ENCODE measurements at regions of chr19 and their contacts with region 1.

Region 1: GRCh38 chr19:13195678-13196077 is 45.5 kb downstream of the IER2 start:
- DNase-seq: peak; percentile 57
- ATAC-seq: peak; percentile 79
- H3K4me3 Mint-ChIP-seq: no peak overlapping the region
- H3K27ac Mint-ChIP-seq: peak overlapping the region; percentile 63
- H3K4me1 Mint-ChIP-seq: peaks cover 29% of the 10 kb centered on the region
- H3K27me3 Mint-ChIP-seq: no peaks in the 10 kb centered on the region
- CTCF ChIP-seq: no peak

Region 2: DNA sequence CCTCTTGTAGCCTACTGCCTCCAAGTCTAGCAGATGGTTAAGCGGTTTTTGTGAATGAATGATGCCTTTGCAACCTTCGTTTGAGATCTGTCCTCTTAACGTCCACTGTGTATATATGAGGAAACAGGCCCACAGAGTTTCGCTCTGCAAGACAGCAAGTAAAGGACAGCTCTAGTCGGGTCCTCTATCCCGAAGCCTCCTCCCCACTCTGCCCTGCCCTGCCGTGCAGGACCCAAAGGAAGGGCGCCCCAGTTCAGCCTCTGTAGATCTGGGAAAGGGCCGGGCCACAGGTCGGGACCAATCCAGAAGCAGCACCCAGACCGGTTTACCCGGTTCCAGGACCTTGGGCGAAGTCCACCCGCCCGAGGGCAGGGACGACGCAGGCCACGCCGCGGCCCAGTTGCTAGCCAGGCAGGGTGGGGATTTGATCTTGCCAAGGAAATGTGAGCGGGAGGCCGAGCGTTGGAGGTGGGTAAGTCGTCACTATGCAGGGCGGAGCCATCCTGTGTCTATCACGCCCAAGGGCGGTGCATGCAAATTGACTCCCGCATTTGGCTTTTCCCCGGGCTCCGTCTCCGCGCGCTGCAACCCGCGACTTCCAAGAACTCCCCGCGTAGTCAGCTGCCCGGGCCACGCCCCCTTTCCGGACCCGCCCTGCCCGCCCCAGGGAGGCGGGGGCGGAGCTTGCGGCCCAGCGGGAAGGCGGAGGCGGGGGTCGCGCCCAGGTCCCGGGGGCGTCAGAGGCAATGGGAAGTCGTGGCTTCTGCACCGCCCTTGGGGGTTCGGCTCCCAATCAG is 33.0 kb before region 1 on chr19:
- CTCF ChIA-PET with region 1: interaction called, 33 read pairs
- POLR2A ChIA-PET with region 1: interaction called, 104 read pairs
- intact Hi-C with region 1: loop called (anchors 1 kb)
- DNase-seq: peak; percentile 70
- ATAC-seq: peak; percentile 36
- H3K4me3 Mint-ChIP-seq: peak overlapping the region; percentile 84
- H3K27ac Mint-ChIP-seq: peak overlapping the region; percentile 89
- H3K4me1 Mint-ChIP-seq: peaks cover 87% of the 10 kb centered on the region
- H3K27me3 Mint-ChIP-seq: no peaks in the 10 kb centered on the region
- CTCF ChIP-seq: no peak

Region 3: GRCh38 chr19:13181747-13182388 is 13.8 kb before region 1 on chr19:
- CTCF ChIA-PET with region 1: interaction called, 12 read pairs
- POLR2A ChIA-PET with region 1: interaction called, 11 read pairs
- intact Hi-C with region 1: no loop called
- DNase-seq: no peak
- ATAC-seq: peak; percentile 66
- H3K4me3 Mint-ChIP-seq: peak overlapping the region; percentile 49
- H3K27ac Mint-ChIP-seq: peak overlapping the region; percentile 46
- H3K4me1 Mint-ChIP-seq: peaks cover 33% of the 10 kb centered on the region
- H3K27me3 Mint-ChIP-seq: no peaks in the 10 kb centered on the region
- CTCF ChIP-seq: no peak

Region 4: DNA sequence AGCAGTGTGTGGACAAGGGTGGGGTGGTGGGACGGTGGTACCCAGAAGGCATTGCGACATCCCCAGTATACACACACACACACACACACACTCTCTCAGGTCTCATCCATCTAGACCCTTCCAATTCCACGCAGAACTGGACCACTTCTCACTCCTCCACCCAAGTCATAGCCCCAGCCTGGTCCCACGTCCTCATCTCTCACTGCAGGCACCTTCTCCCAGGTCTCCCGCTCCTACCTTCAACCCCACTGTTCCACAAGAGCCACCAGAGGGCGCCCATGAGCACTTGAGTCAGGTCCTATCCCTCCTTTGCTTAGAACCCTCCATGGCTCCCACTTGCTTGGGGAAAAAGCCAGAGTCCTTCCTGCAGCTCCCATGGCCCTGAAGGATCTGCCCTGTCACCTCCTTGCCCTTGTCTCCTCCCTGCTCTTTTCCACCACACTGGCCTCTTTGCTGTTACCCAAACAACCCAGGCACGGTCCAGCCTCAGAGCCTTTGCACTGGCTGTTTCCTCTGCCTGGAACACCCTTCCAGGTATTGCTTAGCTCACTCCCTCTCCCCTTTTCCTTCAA is 17.2 kb after region 1 on chr19:
- CTCF ChIA-PET with region 1: interaction called, 9 read pairs
- POLR2A ChIA-PET with region 1: interaction called, 5 read pairs
- intact Hi-C with region 1: loop called (anchors 1 kb)
- DNase-seq: peak; percentile 60
- ATAC-seq: no peak
- H3K4me3 Mint-ChIP-seq: no peak overlapping the region
- H3K27ac Mint-ChIP-seq: no peak overlapping the region
- H3K4me1 Mint-ChIP-seq: peaks cover 66% of the 10 kb centered on the region
- H3K27me3 Mint-ChIP-seq: no peaks in the 10 kb centered on the region
- CTCF ChIP-seq: no peak

Region 5: DNA sequence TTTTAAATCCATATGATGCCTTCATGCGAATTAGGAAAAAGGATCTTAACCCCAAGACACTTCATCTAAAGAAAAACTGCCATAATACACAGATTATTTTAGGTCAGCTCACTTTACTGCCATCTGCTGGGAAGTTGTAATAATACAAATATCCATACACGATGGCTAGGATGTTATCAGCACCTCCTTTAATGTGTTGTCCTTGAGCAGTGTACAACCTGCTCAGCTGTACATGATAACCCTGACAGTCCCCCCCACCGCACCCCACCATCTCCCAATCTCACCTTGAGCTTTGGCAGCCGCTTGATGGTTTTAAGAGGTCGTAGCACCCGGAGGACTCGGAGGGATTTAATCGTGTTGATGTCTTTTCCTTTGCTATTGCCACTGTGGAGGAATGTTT is 66.8 kb after region 1 on chr19:
- CTCF ChIA-PET with region 1: interaction called, 52 read pairs
- POLR2A ChIA-PET with region 1: interaction called, 13 read pairs
- intact Hi-C with region 1: loop called (anchors 1 kb)
- DNase-seq: no peak
- ATAC-seq: peak; percentile 36
- H3K4me3 Mint-ChIP-seq: no peak overlapping the region
- H3K27ac Mint-ChIP-seq: peak overlapping the region; percentile 35
- H3K4me1 Mint-ChIP-seq: peaks cover 28% of the 10 kb centered on the region
- H3K27me3 Mint-ChIP-seq: peaks cover under 1% of the 10 kb centered on the region
- CTCF ChIP-seq: no peak

Measured in activated B cell treated with CpG ODN at 0.5 μM for 24 hours (primary cell).